B cell (primary cell): ENCODE measurements at regions of chr1 and their contacts with region 1.

Region 1: DNA sequence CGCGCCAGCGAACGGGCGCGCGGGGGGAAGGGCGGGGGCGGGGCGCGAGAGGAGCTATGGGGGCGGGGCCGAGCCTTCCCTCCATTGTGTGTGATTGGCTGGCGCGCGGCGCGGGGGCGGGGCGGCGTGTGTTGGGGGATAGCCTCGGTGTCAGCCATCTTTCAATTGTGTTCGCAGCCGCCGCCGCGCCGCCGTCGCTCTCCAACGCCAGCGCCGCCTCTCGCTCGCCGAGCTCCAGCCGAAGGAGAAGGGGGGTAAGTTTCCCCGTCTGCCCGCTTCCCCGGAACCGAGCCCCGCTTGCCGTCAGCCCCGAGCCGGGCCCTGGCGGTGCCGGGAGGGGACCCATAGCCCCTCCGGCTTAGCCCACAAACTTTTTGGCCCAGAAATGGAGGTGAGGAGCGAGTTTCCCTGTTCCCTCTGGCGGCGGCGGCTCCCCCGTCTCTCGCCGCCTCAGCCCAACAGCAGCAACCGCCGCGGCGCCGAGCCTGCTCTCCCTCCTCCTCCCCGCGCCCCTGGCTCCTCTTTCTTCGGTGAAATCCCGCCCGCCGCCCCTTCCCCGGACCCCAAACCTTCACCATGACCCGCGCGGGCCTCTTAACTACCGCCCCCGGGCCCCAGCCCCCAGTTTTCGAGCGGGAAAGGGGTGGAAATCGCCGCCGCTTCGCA is at the start of gene H3-3A:
- DNase-seq: peak; percentile 98
- ATAC-seq: peak; percentile 81
- H3K4me3 ChIP-seq: peak within 1 kb of the TSS; percentile 86 to 100 (median 96)
- H3K4me3 Mint-ChIP-seq: peak within 1 kb of the TSS; percentile 100
- H3K27ac ChIP-seq: peak within 1 kb of the TSS; percentile 93 to 96
- H3K27ac Mint-ChIP-seq: peak within 1 kb of the TSS; percentile 99
- H3K4me1 ChIP-seq: peaks cover 33 to 34% of the 10 kb centered on the region in 2 donors
- H3K4me1 Mint-ChIP-seq: peaks cover 46% of the 10 kb centered on the region
- H3K27me3 ChIP-seq: no peaks in the 10 kb centered on the region
- H3K27me3 Mint-ChIP-seq: no peaks in the 10 kb centered on the region
- CTCF ChIP-seq: no peak
- total RNA-seq, gene H3-3A: 519 and 561 TPM in 2 replicates

Region 2: DNA sequence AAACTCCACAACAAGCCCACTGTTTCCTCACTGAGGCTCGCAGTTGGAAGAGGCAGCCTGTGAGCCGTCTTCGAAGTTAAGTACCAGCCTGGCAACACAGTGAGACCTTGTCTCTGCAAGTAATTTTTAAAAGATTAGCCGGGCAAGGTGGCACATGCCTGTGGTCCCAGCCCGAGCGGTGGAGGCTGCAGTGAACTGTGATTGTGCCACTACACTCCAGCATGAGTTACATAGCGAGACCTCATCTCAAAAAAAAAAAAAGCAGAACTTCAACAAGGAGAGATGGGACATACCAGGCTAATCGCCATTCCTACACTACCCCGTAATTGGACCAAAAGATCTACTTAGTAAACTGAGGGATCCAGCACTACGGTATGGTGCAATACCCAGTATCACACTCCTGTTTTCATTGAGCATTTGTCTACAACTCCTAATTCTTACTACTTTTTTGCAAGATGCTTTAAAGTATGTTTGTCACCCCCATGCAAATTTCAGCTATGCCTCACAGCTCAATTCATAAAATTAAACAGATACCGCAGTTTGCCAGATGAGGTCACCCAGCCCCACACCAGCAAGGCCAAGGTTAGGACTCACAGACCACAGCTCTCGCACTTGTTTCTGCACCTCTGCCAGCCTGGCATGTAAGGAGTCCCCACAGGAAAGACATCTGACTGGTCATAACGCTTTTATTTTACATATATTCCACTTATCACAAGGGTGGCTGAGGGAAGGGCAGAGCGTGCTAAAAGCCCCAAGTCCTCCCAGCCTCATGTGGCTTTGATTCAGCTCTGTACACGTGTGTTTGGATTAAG is 84.5 kb before region 1 on chr1:
- CTCF ChIA-PET with region 1: interaction called, 32 read pairs
- POLR2A ChIA-PET with region 1: interaction called, 7 read pairs
- intact Hi-C with region 1: no loop called
- DNase-seq: peak; percentile 71
- ATAC-seq: peak; percentile 80
- H3K4me3 ChIP-seq: no peak overlapping the region
- H3K4me3 Mint-ChIP-seq: peak overlapping the region; percentile 67
- H3K27ac ChIP-seq: peak overlapping the region; percentile 27 to 38
- H3K27ac Mint-ChIP-seq: peak overlapping the region; percentile 83
- H3K4me1 ChIP-seq: peaks cover 16 to 23% of the 10 kb centered on the region in 2 donors
- H3K4me1 Mint-ChIP-seq: peaks cover 25% of the 10 kb centered on the region
- H3K27me3 ChIP-seq: no peaks in the 10 kb centered on the region
- H3K27me3 Mint-ChIP-seq: no peaks in the 10 kb centered on the region
- CTCF ChIP-seq: peak; percentile 5

Region 3: GRCh38 chr1:226029093-226029496 is 33.6 kb before region 1 on chr1:
- CTCF ChIA-PET with region 1: interaction called, 18 read pairs
- POLR2A ChIA-PET with region 1: interaction called, 38 read pairs
- intact Hi-C with region 1: loop called (anchors 1 kb)
- DNase-seq: peak; percentile 90
- ATAC-seq: peak; percentile 92
- H3K4me3 ChIP-seq: peak overlapping the region in 1 of 5 experiments; percentile 9
- H3K4me3 Mint-ChIP-seq: peak overlapping the region; percentile 81
- H3K27ac ChIP-seq: peak overlapping the region; percentile 70 to 87
- H3K27ac Mint-ChIP-seq: peak overlapping the region; percentile 97
- H3K4me1 ChIP-seq: peaks cover 34 to 35% of the 10 kb centered on the region in 2 donors
- H3K4me1 Mint-ChIP-seq: peaks cover 44% of the 10 kb centered on the region
- H3K27me3 ChIP-seq: no peaks in the 10 kb centered on the region
- H3K27me3 Mint-ChIP-seq: no peaks in the 10 kb centered on the region
- CTCF ChIP-seq: no peak

Region 4: GRCh38 chr1:226100436-226101391 is 38.0 kb after region 1 on chr1:
- CTCF ChIA-PET with region 1: interaction called, 15 read pairs
- POLR2A ChIA-PET with region 1: interaction called, 7 read pairs
- intact Hi-C with region 1: no loop called
- DNase-seq: peak; percentile 61
- ATAC-seq: peak; percentile 56
- H3K4me3 ChIP-seq: peak overlapping the region; percentile 44 to 76 (median 56)
- H3K4me3 Mint-ChIP-seq: peak overlapping the region; percentile 94
- H3K27ac ChIP-seq: no peak overlapping the region
- H3K27ac Mint-ChIP-seq: peak overlapping the region; percentile 15
- H3K4me1 ChIP-seq: peaks cover 3 to 10% of the 10 kb centered on the region in 2 donors
- H3K4me1 Mint-ChIP-seq: peaks cover 14% of the 10 kb centered on the region
- H3K27me3 ChIP-seq: no peaks in the 10 kb centered on the region
- H3K27me3 Mint-ChIP-seq: no peaks in the 10 kb centered on the region
- CTCF ChIP-seq: no peak

Region 5: GRCh38 chr1:226186124-226187018 is 123.7 kb after region 1 on chr1 and contains the start of gene ACBD3:
- CTCF ChIA-PET with region 1: interaction called, 8 read pairs
- POLR2A ChIA-PET with region 1: interaction called, 8 read pairs
- intact Hi-C with region 1: loop called (anchors 2 kb)
- DNase-seq: peak; percentile 92
- ATAC-seq: peak; percentile 89
- H3K4me3 ChIP-seq: peak within 1 kb of the TSS; percentile 58 to 94 (median 70)
- H3K4me3 Mint-ChIP-seq: peak within 1 kb of the TSS; percentile 96
- H3K27ac ChIP-seq: peak within 1 kb of the TSS; percentile 86 to 96
- H3K27ac Mint-ChIP-seq: peak within 1 kb of the TSS; percentile 95
- H3K4me1 ChIP-seq: peaks cover 42 to 52% of the 10 kb centered on the region in 2 donors
- H3K4me1 Mint-ChIP-seq: peaks cover 41% of the 10 kb centered on the region
- H3K27me3 ChIP-seq: no peaks in the 10 kb centered on the region
- H3K27me3 Mint-ChIP-seq: no peaks in the 10 kb centered on the region
- CTCF ChIP-seq: no peak
- total RNA-seq, gene ACBD3: 60.6 and 73.9 TPM in 2 replicates